ENCODE measurements at regions of chr17 and their contacts with region 1.

Region 1: DNA sequence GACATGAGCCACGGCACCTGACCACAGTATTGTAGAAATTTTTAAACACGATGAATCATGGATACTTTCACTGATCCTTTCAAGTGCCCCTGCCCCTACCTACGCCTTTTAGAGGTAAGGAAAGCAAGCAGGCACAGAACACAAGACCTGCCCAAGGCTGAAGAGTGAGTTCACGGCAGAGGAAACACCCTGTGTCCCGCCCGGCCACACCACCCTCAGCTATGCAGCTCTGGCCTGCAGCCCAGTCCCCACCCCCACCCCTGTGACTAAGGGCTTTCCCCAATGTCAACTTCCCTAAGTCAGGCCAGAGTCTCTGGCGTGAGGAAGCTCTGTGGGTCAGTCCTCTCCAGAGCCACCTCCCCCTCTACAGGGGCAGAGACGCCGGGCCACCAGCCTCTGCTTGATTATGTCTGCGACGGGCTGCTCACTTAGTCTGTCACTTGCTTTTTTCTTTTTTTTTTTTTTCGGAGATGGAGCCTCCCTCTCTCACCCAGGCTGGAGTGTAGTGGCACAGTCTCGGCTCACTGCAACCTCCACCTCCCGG is 8.4 kb downstream of the SLC16A5 start:
- DNase-seq: peak; percentile 87
- H3K4me3 Mint-ChIP-seq: peak overlapping the region; percentile 78
- H3K27ac Mint-ChIP-seq: peak overlapping the region; percentile 89
- H3K4me1 Mint-ChIP-seq: peaks cover 29% of the 10 kb centered on the region
- H3K27me3 Mint-ChIP-seq: no peaks in the 10 kb centered on the region
- CTCF ChIP-seq: no peak

Region 2: GRCh38 chr17:74852237-74853047 is 243.7 kb before region 1 on chr17:
- CTCF ChIA-PET with region 1: no interaction called
- intact Hi-C with region 1: no loop called
- DNase-seq: no peak
- H3K4me3 Mint-ChIP-seq: no peak overlapping the region
- H3K27ac Mint-ChIP-seq: no peak overlapping the region
- H3K4me1 Mint-ChIP-seq: no peaks in the 10 kb centered on the region
- H3K27me3 Mint-ChIP-seq: peaks cover 91% of the 10 kb centered on the region
- CTCF ChIP-seq: no peak

Region 3: GRCh38 chr17:75034236-75034908 is 61.8 kb before region 1 on chr17:
- CTCF ChIA-PET with region 1: interaction called, 9 read pairs
- intact Hi-C with region 1: loop called (anchors 2 kb)
- DNase-seq: peak; percentile 95
- H3K4me3 Mint-ChIP-seq: peak overlapping the region; percentile 97
- H3K27ac Mint-ChIP-seq: peak overlapping the region; percentile 100
- H3K4me1 Mint-ChIP-seq: peaks cover 30% of the 10 kb centered on the region
- H3K27me3 Mint-ChIP-seq: peaks cover 16% of the 10 kb centered on the region
- CTCF ChIP-seq: no peak

Region 4: DNA sequence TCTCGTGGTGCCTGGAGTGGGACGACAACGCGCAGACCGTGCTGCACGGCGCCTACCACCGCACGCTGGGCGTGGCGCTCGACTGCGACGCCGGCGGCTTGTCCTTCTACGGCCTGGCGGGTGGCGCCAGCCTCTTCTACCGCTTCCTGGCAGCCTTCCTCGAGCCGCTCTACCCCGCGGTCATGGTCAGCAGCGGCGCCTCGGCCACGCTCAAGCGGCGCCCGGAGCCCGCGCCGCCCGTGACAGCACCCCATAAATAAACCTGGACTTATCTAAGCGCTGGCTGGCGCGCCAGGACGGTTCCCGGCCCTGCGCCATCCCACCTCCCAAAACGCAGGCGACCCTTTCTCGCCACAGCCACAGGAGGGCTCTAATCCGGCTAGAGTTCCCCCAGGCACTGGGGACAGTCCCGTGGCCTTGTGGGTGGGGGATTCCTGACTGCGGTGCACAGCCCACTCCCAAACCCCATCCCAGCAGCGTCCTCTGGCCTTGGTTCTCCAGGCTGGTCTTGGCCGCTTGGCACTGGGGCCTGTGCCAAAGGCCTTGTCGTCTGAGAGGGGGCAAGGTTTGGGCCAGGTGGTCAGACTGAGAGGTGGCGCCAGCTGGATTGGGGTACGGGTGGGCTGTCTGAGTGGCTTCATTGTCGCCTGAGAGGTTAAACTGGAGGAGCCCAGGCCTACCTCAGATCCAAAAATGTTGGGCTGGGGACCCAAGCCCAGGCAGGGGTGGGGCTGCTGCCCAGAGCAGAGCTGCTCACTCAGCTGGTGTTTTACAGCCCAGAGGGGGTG is 18.5 kb before region 1 on chr17:
- CTCF ChIA-PET with region 1: interaction called, 12 read pairs
- intact Hi-C with region 1: loop called (anchors 2 kb)
- DNase-seq: peak; percentile 71
- H3K4me3 Mint-ChIP-seq: peak overlapping the region; percentile 66
- H3K27ac Mint-ChIP-seq: peak overlapping the region; percentile 84
- H3K4me1 Mint-ChIP-seq: peaks cover 23% of the 10 kb centered on the region
- H3K27me3 Mint-ChIP-seq: no peaks in the 10 kb centered on the region
- CTCF ChIP-seq: no peak

Region 5: DNA sequence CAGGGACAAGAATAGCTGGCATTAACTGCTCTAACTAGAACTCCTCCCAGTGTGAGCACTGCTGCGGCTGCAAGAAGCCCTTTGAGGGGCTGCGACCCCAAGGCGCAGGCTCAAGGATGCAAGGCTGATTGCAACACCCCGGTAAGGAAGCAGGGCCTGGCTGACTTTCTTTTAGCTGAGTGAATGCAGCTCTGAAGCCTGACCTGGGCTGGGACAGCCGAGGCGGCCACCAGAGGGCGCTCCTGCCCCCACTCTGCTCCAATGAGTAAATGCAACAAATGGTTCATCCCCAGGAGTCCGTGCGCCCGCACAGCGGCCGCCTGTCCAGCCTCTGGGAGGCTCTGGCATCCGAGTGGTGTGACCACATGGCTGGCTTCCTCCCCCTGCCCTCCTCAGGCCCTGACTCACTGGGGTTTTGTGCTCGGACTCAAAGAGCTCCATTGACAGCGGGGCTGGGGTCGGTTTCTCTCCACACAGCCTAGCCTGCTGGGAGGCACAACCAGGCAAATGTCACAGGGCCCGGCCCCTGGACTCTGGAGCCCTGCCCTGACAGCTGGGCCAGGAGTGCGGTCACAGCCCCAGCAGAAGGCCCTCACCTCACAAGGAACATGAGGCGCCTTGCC is 536.8 kb after region 1 on chr17 and contains the start of gene SMIM5:
- CTCF ChIA-PET with region 1: no interaction called
- intact Hi-C with region 1: no loop called
- DNase-seq: peak; percentile 95
- H3K4me3 Mint-ChIP-seq: peak within 1 kb of the TSS; percentile 46
- H3K27ac Mint-ChIP-seq: peak within 1 kb of the TSS; percentile 78
- H3K4me1 Mint-ChIP-seq: peaks cover 14% of the 10 kb centered on the region
- H3K27me3 Mint-ChIP-seq: no peaks in the 10 kb centered on the region
- CTCF ChIP-seq: peak; percentile 92
- total RNA-seq, gene SMIM5: 1.9 and 3.5 TPM in 2 replicates

Measured in Calu3 (cell line).